ENCODE measurements at regions of chr1 and their contacts with region 1.

Region 1: GRCh38 chr1:182662121-182662890 is 22.1 kb downstream of the RGS8 start:
- DNase-seq: no peak
- ATAC-seq: no peak
- H3K4me3 ChIP-seq: no peak overlapping the region
- H3K27ac ChIP-seq: no peak overlapping the region
- H3K4me1 ChIP-seq: peaks cover 0 to 10% (median 0%) of the 10 kb centered on the region in 9 donors
- H3K27me3 ChIP-seq: peaks cover 0 to 6% (median 0%) of the 10 kb centered on the region in 7 donors
- CTCF ChIP-seq: no peak

Region 2: DNA sequence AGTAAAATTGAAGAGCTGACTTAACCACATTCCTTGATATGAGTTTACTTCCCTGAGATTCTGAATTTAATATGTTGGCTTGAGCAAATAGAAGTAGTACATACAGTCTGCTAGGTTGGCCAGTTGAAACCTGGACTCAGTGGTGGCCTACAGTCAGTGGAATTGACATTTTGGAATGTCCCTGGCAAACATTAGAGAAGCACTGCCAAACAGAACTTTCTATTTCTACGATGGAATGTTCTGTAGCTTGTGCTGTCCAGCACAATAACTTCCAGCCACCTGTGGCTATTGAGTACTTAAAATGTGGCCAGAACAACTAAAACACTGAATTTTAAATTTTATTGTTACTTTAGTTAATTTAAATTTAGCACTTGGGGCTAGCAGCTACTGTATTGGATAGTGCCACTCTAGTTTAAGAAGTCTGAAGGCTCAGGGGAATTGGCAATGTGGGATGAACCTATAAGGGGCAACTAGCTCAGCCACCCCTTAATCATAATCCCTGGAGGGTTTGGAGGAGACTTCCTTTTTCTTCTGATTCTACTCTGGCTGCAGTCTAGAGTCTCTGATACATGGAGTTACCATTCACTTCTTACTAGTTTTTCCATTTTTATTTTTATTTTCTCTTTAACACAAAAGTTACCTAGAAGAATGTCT is 251.6 kb before region 1 on chr1:
- intact Hi-C with region 1: no loop called
- DNase-seq: peak in 1 of 2 donors; percentile 7
- ATAC-seq: peak; percentile 58 to 97 (median 88)
- H3K4me3 ChIP-seq: no peak overlapping the region
- H3K27ac ChIP-seq: peak overlapping the region in 2 of 10 donors; percentile 59 to 62
- H3K4me1 ChIP-seq: peaks cover 0 to 11% (median 4%) of the 10 kb centered on the region in 9 donors
- H3K27me3 ChIP-seq: peaks cover 0 to 15% (median 6%) of the 10 kb centered on the region in 7 donors
- CTCF ChIP-seq: no peak

Region 3: DNA sequence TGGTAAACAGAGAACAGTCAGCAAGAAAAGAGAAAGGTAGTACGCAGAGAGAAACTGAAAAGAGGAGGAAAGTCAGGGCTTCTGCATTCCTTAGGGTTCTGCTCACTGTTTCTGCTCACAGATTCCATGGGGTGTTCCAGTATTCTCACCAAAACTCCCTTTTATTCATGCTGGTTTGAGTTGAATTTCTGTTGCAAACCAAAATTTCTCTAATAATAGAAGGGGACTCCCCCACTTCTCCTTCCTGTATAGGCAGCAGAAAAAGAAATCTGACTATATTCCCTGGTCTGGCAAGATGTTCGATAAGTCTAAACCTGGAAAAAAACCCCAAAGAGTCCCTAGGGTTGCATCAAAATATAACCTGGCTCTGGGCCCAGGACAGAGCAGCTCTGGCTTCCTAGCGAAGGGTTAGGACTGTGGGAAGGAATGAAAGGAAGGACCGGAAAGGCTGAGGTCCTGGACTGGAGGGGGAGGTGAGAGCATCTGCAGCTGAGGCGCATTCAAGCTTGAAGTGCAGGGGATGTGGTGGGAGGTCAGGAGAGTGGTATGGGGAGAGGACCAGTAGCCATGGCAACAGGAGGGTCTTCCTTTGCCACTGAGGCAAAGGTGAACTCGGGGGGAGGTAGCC is 39.3 kb before region 1 on chr1:
- intact Hi-C with region 1: loop called in 1 of 10 experiments (anchors 5 kb)
- DNase-seq: peak in 1 of 2 donors; percentile 60
- ATAC-seq: peak; percentile 68 to 89 (median 84)
- H3K4me3 ChIP-seq: peak overlapping the region in 1 of 10 donors; percentile 5
- H3K27ac ChIP-seq: peak overlapping the region in 8 of 10 donors; percentile 21 to 72 (median 45)
- H3K4me1 ChIP-seq: peaks cover 0 to 46% (median 32%) of the 10 kb centered on the region in 9 donors
- H3K27me3 ChIP-seq: peaks cover 0 to 2% (median 0%) of the 10 kb centered on the region in 7 donors
- CTCF ChIP-seq: no peak